Uterus (tissue), 4 donors: ENCODE measurements at regions of chr6 and their contacts with region 1.

Region 1: DNA sequence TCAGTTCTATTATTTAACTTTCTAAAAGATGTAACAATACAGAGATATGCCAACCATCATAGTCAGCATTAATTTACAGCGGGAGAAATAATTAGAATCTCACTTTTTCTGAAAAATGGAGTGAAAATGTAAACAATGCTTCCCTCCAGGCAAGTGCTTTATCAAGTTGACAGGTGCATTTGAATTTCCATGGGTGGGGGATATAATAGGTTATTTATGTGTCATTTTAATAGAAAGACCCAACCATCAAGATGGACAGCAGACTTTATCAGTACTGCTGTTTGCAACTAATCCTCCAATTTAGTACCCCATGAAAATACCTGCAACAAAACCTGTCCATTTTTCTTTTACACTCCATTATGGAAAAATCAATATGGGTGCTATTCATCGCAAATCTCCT is 780.1 kb downstream of the TFAP2A start:
- DNase-seq: no peak
- H3K4me3 ChIP-seq: no peak overlapping the region
- H3K27ac ChIP-seq: no peak overlapping the region
- H3K4me1 ChIP-seq: no peaks in the 10 kb centered on the region
- H3K27me3 ChIP-seq: no peaks in the 10 kb centered on the region
- CTCF ChIP-seq: no peak
- POLR2A ChIP-seq: no peak

Region 2: GRCh38 chr6:9039272-9039671 is 595.5 kb before region 1 on chr6:
- intact Hi-C with region 1: loop called (anchors 5 kb)
- DNase-seq: no peak
- H3K4me3 ChIP-seq: no peak overlapping the region
- H3K27ac ChIP-seq: no peak overlapping the region
- H3K4me1 ChIP-seq: no peaks in the 10 kb centered on the region
- H3K27me3 ChIP-seq: no peaks in the 10 kb centered on the region
- CTCF ChIP-seq: no peak
- POLR2A ChIP-seq: no peak